ENCODE measurements at regions of chr11 and their contacts with region 1.

Region 1: DNA sequence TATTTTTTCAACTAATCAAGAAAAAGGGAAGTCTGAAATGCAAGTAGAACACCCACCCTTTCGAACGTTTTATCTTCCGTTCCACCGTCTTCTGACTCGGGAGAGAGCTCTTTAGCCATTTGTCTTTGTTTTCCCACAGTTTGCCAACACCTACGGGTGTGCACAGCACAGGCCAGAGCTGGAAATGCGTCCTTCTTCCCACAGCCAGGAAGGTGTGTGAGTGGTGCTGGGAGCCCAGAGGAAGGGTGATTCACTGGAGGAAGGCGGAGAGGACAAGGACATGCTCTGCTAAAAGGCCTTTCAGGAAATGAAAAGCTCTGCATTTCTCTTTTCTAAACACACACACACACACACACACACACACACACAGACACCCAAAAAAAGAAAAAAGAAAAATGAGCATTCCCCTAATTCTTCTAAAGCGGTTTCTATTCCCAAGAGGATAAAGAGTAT is 18.5 kb downstream of the ENDOD1 start:
- DNase-seq: peak; percentile 94
- H3K4me3 Mint-ChIP-seq: peak overlapping the region; percentile 75
- H3K27ac Mint-ChIP-seq: peak overlapping the region; percentile 98
- H3K4me1 Mint-ChIP-seq: peaks cover 38% of the 10 kb centered on the region
- H3K27me3 Mint-ChIP-seq: no peaks in the 10 kb centered on the region
- CTCF ChIP-seq: no peak

Region 2: GRCh38 chr11:95084509-95084908 is 23.7 kb before region 1 on chr11:
- CTCF ChIA-PET with region 1: interaction called, 22 read pairs
- POLR2A ChIA-PET with region 1: interaction called, 123 read pairs
- intact Hi-C with region 1: no loop called
- DNase-seq: peak; percentile 79
- H3K4me3 Mint-ChIP-seq: no peak overlapping the region
- H3K27ac Mint-ChIP-seq: no peak overlapping the region
- H3K4me1 Mint-ChIP-seq: peaks cover 15% of the 10 kb centered on the region
- H3K27me3 Mint-ChIP-seq: no peaks in the 10 kb centered on the region
- CTCF ChIP-seq: no peak

Region 3: DNA sequence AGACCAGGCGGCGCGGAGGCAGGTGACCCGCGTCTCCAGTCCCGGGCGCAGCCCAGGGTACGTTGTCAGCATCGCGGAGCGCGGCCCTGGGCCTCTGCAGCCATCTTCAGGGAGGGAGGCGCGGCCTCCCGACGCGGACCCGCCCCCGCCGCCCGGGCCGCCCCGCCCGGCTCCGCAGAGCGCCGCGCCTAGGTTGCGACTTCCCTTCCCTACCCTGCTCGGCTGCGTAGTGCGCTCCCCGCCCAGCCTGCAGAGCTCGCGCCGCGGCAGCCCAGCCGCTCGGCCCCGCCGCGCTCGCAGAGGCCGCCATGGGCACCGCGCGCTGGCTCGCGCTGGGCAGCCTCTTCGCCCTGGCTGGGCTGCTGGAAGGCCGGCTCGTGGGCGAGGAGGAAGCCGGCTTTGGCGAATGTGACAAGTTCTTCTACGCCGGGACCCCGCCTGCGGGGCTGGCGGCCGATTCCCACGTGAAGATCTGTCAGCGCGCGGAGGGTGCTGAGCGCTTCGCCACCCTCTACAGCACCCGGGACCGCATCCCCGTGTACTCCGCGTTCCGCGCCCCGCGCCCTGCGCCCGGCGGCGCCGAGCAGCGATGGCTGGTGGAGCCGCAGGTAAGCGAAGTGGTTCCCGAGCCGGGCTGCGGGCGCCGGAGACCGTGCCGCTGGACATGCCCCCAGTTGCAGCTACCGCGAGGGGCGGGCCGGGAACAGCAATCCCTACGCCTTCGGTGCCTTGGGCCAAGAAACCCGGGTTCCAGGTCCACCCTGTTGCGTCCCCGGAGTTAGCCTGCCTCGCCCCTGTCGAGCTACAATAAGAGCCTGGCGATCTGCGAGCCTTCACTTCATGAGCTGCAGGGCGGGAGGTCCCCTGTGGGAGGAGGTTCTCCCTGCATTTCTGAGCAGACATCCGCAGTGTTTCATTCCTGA is 18.3 kb before region 1 on chr11 and contains the start of gene ENDOD1:
- CTCF ChIA-PET with region 1: interaction called, 22 read pairs
- POLR2A ChIA-PET with region 1: interaction called, 123 read pairs
- intact Hi-C with region 1: no loop called
- DNase-seq: peak; percentile 80
- H3K4me3 Mint-ChIP-seq: peak within 1 kb of the TSS; percentile 85
- H3K27ac Mint-ChIP-seq: peak within 1 kb of the TSS; percentile 64
- H3K4me1 Mint-ChIP-seq: peaks cover 36% of the 10 kb centered on the region
- H3K27me3 Mint-ChIP-seq: no peaks in the 10 kb centered on the region
- CTCF ChIP-seq: no peak
- total RNA-seq, gene ENDOD1: 10.8 and 11.4 TPM in 2 replicates

Region 4: DNA sequence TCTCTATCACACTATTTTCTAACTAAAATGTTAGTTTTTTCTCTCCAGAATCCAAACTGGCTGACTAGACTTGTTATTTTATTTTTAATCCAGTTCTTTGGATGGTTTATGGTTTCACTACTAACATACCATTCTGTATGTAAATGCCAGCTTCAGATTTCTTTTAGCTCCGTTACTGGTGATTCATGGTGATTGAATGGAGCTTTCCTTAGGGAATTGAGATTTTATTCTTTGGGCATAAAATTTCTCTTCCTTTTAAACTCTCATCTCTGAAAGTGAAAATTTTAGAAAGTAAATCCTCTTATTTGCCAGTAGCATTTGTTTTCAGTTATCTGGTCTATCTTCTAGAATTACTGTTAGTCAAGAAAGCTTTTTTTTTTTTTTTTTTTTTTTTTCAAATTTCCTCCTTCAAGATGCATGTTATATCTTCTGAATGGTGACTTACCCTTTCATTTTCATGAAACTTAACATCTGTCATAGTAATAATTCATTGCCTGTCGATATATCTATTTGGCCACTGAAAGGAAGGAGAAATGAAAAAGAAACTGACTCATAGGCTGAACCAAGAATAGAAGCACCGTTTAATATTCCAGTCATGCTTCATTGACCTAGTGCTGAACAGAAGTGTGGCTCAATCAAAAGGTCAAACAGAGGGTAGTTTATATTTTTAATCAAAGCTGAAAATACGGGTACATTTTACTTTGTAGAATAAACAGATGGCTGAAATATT is 12.2 kb before region 1 on chr11:
- CTCF ChIA-PET with region 1: interaction called, 22 read pairs
- POLR2A ChIA-PET with region 1: interaction called, 123 read pairs
- intact Hi-C with region 1: no loop called
- DNase-seq: peak; percentile 35
- H3K4me3 Mint-ChIP-seq: no peak overlapping the region
- H3K27ac Mint-ChIP-seq: peak overlapping the region; percentile 37
- H3K4me1 Mint-ChIP-seq: peaks cover 31% of the 10 kb centered on the region
- H3K27me3 Mint-ChIP-seq: no peaks in the 10 kb centered on the region
- CTCF ChIP-seq: no peak

Region 5: DNA sequence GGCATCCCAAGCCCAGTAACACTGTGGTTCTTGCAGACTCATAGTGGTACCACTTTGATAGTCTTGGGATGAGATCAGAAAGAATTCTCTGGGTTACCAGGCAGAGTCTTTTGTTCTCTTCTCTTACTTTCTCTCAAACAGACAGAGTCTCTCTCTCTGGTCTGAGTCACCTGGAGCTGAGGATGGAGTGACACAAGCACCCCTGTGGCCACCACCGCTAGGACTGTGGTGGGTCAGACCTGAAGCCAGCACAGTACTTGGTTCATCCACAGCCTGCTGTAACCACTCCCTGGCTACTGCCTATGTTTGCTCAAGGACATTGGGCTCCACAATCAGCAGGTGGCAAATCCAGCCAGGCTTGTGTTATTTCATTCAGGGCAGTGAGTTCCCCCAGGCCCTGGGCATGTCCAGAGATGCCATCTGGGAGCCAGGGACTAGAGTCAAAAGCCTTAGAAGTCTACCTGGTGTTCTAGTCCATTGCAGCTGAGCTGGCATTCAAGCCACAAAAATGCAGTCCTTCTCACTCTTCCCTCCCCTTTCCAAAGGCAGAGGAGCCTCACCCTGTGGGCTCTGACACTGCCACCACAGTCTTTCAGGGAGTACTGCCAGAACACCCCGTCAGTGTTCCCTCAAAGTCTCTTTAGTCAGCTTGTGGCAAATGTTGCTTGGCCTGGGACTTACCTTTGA is 11.3 kb after region 1 on chr11:
- CTCF ChIA-PET with region 1: interaction called, 6 read pairs
- POLR2A ChIA-PET with region 1: interaction called, 47 read pairs
- intact Hi-C with region 1: no loop called
- DNase-seq: peak; percentile 40
- H3K4me3 Mint-ChIP-seq: no peak overlapping the region
- H3K27ac Mint-ChIP-seq: peak overlapping the region; percentile 76
- H3K4me1 Mint-ChIP-seq: peaks cover 22% of the 10 kb centered on the region
- H3K27me3 Mint-ChIP-seq: no peaks in the 10 kb centered on the region
- CTCF ChIP-seq: no peak

Region 6: GRCh38 chr11:95138448-95138847 is 30.3 kb after region 1 on chr11:
- CTCF ChIA-PET with region 1: interaction called, 4 read pairs
- POLR2A ChIA-PET with region 1: interaction called, 78 read pairs
- intact Hi-C with region 1: loop called (anchors 1 kb)
- DNase-seq: peak; percentile 20
- H3K4me3 Mint-ChIP-seq: no peak overlapping the region
- H3K27ac Mint-ChIP-seq: no peak overlapping the region
- H3K4me1 Mint-ChIP-seq: peaks cover 13% of the 10 kb centered on the region
- H3K27me3 Mint-ChIP-seq: no peaks in the 10 kb centered on the region
- CTCF ChIP-seq: no peak

Region 7: DNA sequence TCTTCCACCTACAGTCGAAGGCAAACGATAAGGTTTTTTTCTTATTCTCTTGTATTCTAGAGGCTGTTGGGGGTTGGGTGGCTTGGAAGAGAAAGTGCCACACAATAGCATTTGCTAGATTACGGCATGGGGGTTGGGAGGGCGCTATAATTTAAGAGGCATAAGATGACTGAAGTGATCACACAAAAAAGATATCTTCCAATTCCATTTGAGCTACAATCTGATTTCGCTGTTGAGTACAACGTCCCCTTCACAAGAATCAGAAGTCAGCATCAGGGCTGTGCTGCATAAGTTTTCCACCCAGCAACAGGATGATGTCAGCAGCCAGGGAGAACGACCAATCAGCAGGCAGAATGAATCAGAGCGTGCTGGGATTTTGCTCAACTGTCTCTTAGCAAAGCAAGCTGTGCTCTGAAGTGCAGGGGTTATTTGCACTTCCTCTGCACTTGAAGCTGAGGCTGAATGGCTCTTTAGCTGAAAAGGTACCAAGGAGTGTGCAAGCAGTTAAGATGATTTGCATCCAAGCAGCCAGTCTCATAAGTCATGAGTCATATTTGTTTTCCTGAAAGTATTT is 146.0 kb after region 1 on chr11:
- CTCF ChIA-PET with region 1: no interaction called
- POLR2A ChIA-PET with region 1: no interaction called
- intact Hi-C with region 1: no loop called
- DNase-seq: peak; percentile 64
- H3K4me3 Mint-ChIP-seq: no peak overlapping the region
- H3K27ac Mint-ChIP-seq: no peak overlapping the region
- H3K4me1 Mint-ChIP-seq: peaks cover 5% of the 10 kb centered on the region
- H3K27me3 Mint-ChIP-seq: no peaks in the 10 kb centered on the region
- CTCF ChIP-seq: no peak